ENCODE measurements at regions of chr2 and their contacts with region 1.

Region 1: GRCh38 chr2:69914170-69914960 is 544 bp upstream of the MXD1 start:
- DNase-seq: peak; percentile 93
- H3K4me3 ChIP-seq: peak overlapping the region; percentile 68 to 80
- H3K27ac ChIP-seq: peak overlapping the region; percentile 88 to 93
- H3K4me1 ChIP-seq: peaks cover 2 to 7% of the 10 kb centered on the region in 2 experiments; a peak in 3 of 4 replicates
- H3K27me3 ChIP-seq: no peaks in the 10 kb centered on the region
- CTCF ChIP-seq: no peak; the same call in 1 of the 2 replicates
- EP300 ChIP-seq: no peak
- RAD21 ChIP-seq: peak; percentile 38; the same call in 1 of the 2 replicates

Region 2: GRCh38 chr2:69667805-69668382 is 246.5 kb before region 1 on chr2:
- CTCF ChIA-PET with region 1: no interaction called
- POLR2A ChIA-PET with region 1: no interaction called
- DNase-seq: no peak
- H3K4me3 ChIP-seq: no peak overlapping the region
- H3K27ac ChIP-seq: peak overlapping the region in 1 of 2 experiments; percentile 13; a peak in 1 of 4 replicates
- H3K4me1 ChIP-seq: peaks cover 0 to 6% of the 10 kb centered on the region in 2 experiments; a peak in 2 of 4 replicates
- H3K27me3 ChIP-seq: no peaks in the 10 kb centered on the region
- CTCF ChIP-seq: no peak
- EP300 ChIP-seq: no peak
- RAD21 ChIP-seq: no peak

Region 3: DNA sequence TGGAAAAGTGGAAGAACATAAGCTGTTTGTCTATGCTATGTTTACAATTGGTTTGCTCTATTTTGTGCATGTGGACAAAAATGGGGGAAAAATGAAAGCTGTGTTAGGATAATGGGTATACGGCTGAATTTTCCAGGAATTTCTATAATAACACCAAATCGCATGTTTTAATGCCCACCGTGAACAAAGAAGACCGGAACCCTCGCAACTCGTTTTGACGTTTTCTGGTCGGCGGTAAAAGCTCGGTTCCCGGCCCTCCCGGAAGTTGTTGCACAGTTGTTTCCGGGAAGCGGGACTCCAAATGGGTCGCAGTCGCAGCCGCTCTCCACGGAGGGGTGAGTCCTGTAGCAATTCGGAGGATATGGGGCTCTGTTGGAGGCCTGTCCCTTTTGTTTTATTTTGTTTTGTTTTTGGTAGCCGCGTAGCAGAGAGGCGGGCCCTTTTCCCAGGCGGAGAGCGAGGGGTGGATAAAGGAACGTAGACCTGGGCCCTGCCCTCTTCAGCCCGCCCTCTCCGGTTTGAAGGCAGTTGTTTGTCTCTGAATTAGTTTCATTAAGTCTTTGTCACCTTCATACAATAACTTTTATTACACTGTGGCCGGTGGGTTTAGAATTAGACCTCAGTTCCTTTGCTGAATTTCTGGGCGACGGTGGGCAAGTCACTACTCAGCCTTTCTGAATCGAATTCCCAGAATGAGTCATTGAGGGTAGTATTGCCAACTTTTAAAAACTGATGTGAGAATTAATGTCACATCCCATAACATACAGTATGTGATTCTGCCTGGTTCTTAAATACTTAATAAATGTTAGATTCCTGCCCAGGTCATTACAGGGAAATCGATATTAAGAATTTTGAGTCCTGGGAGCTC is 20.4 kb before region 1 on chr2 and contains the start of gene SNRNP27:
- CTCF ChIA-PET with region 1: interaction called, 7 read pairs
- POLR2A ChIA-PET with region 1: interaction called, 14 read pairs
- DNase-seq: peak; percentile 79
- H3K4me3 ChIP-seq: peak within 1 kb of the TSS; percentile 81 to 97
- H3K27ac ChIP-seq: peak within 1 kb of the TSS; percentile 76 to 86
- H3K4me1 ChIP-seq: peaks cover 0 to 5% of the 10 kb centered on the region in 2 experiments; a peak in 1 of 4 replicates
- H3K27me3 ChIP-seq: no peaks in the 10 kb centered on the region
- CTCF ChIP-seq: no peak
- EP300 ChIP-seq: 0 out of 4 replicates have a peak, but pooled peaks of 1 of the 2 experiments have one; percentile 9
- RAD21 ChIP-seq: no peak
- polyA plus RNA-seq, gene SNRNP27: 50.9 and 68.4 TPM in 2 replicates

Region 4: GRCh38 chr2:70070541-70071268 is 156.3 kb after region 1 on chr2:
- CTCF ChIA-PET with region 1: interaction called, 74 read pairs
- POLR2A ChIA-PET with region 1: interaction called, 5 read pairs
- DNase-seq: peak; percentile 85
- H3K4me3 ChIP-seq: no peak overlapping the region
- H3K27ac ChIP-seq: peak overlapping the region; percentile 43 to 72
- H3K4me1 ChIP-seq: no peaks in the 10 kb centered on the region; a peak in 1 of 4 replicates
- H3K27me3 ChIP-seq: no peaks in the 10 kb centered on the region
- CTCF ChIP-seq: peak; percentile 80
- EP300 ChIP-seq: no peak
- RAD21 ChIP-seq: peak; percentile 81

Region 5: DNA sequence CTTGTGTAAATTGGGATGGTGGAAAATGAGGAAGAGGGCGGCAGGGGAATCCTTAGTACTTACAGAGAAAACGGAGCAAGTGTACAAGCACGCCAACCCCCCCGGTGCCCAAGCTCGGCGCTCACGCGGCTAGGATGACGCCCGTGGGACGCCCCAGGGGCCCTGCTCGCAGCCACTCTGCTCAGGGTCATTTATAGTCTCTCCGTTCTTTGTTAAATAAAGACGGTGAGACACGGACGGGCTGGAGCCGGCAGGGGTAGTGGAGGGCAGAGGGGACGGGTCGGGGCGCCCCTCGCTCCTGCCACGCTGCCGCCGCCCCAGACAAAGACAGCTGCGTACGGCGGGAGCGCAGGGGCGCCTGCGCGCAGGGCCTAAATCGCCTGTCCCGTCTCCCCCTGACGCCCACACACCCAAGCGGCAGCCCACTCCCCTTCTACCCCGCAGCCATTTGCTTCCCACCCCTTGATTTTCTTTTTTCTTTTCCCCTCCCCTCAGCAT is 210.7 kb after region 1 on chr2:
- CTCF ChIA-PET with region 1: interaction called, 3 read pairs
- POLR2A ChIA-PET with region 1: interaction called, 29 read pairs
- DNase-seq: peak; percentile 89
- H3K4me3 ChIP-seq: peak overlapping the region; percentile 53 to 60
- H3K27ac ChIP-seq: peak overlapping the region; percentile 85 to 88
- H3K4me1 ChIP-seq: peaks cover 7 to 9% of the 10 kb centered on the region in 2 experiments; a peak in 1 of 4 replicates
- H3K27me3 ChIP-seq: no peaks in the 10 kb centered on the region
- CTCF ChIP-seq: no peak
- EP300 ChIP-seq: no peak
- RAD21 ChIP-seq: no peak

Region 6: DNA sequence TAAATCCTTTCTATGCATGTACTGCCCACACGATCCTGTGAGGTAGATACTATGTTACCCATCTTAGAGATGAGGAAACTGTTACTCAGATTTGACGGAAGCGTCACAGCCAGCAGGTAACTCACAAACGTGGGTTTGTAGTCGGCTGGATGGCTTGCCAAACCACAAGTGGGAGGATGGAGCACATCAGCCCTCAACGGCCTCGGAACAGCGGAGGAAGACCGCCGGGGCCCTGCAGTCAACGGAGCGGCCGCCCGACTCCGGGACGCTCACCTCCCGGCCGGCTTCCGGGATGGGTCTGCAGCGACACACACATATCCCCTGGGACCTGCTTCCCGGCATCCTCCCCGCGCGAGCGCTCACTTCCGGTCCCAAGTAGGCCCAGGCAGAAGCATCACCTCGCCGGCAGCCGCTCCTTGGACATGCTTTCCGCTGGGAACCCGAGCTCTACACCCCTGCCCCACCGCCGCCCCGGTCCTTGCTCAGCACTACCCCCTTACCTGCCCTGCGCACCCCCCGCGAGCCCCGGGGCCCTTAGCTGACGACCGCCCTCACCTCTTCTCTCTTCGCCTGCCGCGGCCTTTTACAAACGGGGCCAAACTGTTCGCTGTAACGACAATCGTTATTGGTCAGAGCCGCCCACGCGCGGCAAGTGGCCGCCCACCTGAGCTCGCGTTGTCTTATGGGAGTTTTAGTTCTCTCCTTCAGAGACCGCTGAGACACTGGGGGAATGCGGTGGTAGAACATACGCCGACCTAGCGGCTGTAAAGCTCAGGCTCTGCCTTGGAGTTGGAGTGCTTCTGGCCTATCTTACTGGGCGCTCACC is 276.3 kb after region 1 on chr2 and contains the start of gene C2orf42:
- CTCF ChIA-PET with region 1: interaction called, 3 read pairs
- POLR2A ChIA-PET with region 1: interaction called, 10 read pairs
- DNase-seq: peak; percentile 94
- H3K4me3 ChIP-seq: peak within 1 kb of the TSS; percentile 79 to 93
- H3K27ac ChIP-seq: peak within 1 kb of the TSS; percentile 87 to 96
- H3K4me1 ChIP-seq: no peaks in the 10 kb centered on the region
- H3K27me3 ChIP-seq: no peaks in the 10 kb centered on the region
- CTCF ChIP-seq: peak; percentile 27; the same call in 1 of the 2 replicates
- EP300 ChIP-seq: no peak
- RAD21 ChIP-seq: no peak
- polyA plus RNA-seq, gene C2orf42: 5.1 and 6.8 TPM in 2 replicates

Measured in SK-N-SH (cell line).